MCF 10A (cell line): ENCODE measurements at regions of chr6 and their contacts with region 1.

Region 1: DNA sequence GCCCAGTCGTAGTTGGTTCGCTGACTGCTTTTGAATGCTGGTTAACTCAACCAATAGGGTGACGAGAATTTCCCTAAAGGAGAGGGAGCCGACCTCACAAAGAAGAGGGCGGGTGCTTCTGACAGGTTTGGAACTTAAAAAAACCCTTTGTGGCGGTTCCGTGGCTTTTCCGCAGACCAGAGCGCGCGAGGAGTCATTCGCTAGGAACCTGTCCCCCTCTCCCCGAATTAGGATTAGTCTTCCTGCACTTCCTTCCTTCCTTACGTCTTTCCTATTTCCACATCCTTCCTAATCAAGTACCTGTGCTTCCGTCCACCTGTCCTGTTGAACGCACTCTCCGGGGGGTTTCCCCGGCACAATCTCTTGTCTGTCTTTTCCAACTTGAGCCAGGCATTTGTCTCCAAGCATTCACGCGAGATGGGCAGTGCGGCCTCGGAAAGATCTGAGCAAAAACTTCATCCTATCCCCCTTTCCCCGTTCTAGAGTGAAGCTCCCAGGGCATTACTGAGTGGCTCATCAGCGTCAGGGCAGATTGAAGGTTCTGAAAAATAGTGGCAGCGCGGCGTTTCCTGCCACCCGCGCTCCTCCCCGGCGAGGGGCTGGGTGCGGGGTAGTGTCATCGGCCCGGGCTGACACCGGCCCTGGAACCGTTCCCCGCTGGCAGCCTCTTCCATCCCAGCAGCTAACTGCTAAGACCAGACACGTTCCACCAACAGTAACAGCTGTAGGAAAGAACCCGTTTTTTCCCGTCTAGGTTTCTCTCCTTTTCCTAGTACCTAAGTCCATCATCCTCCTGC is 1.5 kb upstream of the STXBP5 start:
- DNase-seq: peak; percentile 98
- H3K4me3 Mint-ChIP-seq: peak overlapping the region; percentile 83
- H3K27ac Mint-ChIP-seq: peak overlapping the region; percentile 99
- H3K4me1 Mint-ChIP-seq: peaks cover 7% of the 10 kb centered on the region
- H3K27me3 Mint-ChIP-seq: no peaks in the 10 kb centered on the region
- CTCF ChIP-seq: no peak

Region 2: DNA sequence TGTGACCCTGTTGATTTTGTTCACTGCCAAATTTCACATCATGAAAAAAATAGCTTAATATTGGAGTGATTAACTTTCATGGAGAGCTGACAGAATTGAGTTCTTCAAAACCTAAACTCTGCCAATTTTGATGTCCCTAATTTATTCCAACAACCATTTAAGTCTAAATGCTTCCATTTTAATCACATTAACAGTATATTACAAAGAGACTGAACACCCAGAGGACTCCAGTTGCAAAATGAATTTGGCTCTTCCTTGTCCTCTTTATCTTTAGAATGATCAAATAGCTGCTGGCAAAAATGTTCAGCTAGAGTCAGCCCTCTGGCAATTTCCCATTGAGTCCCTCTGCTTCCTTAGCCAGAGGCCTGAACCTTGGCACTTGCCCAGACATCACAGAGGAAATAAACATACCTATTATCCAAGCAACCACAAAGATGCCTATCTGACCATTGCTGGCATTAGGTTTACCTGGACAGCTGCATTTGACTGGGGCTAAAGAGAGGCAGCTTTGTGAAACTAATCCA is 297.5 kb before region 1 on chr6:
- CTCF ChIA-PET with region 1: interaction called, 3 read pairs
- POLR2A ChIA-PET with region 1: interaction called, 95 read pairs
- intact Hi-C with region 1: loop called (anchors 1 kb)
- DNase-seq: peak; percentile 90
- H3K4me3 Mint-ChIP-seq: no peak overlapping the region
- H3K27ac Mint-ChIP-seq: no peak overlapping the region
- H3K4me1 Mint-ChIP-seq: peaks cover 14% of the 10 kb centered on the region
- H3K27me3 Mint-ChIP-seq: no peaks in the 10 kb centered on the region
- CTCF ChIP-seq: no peak

Region 3: GRCh38 chr6:146990821-146991798 is 211.6 kb before region 1 on chr6:
- CTCF ChIA-PET with region 1: no interaction called
- POLR2A ChIA-PET with region 1: interaction called, 8 read pairs
- intact Hi-C with region 1: loop called (anchors 10 kb)
- DNase-seq: peak; percentile 88
- H3K4me3 Mint-ChIP-seq: peak overlapping the region; percentile 23
- H3K27ac Mint-ChIP-seq: peak overlapping the region; percentile 85
- H3K4me1 Mint-ChIP-seq: peaks cover 23% of the 10 kb centered on the region
- H3K27me3 Mint-ChIP-seq: no peaks in the 10 kb centered on the region
- CTCF ChIP-seq: no peak

Region 4: GRCh38 chr6:147099974-147100373 is 102.7 kb before region 1 on chr6:
- CTCF ChIA-PET with region 1: no interaction called
- POLR2A ChIA-PET with region 1: no interaction called
- intact Hi-C with region 1: no loop called
- DNase-seq: peak; percentile 4
- H3K4me3 Mint-ChIP-seq: no peak overlapping the region
- H3K27ac Mint-ChIP-seq: no peak overlapping the region
- H3K4me1 Mint-ChIP-seq: no peaks in the 10 kb centered on the region
- H3K27me3 Mint-ChIP-seq: no peaks in the 10 kb centered on the region
- CTCF ChIP-seq: no peak

Region 5: GRCh38 chr6:147154454-147154853 is 48.3 kb before region 1 on chr6:
- CTCF ChIA-PET with region 1: interaction called, 3 read pairs
- POLR2A ChIA-PET with region 1: interaction called, 18 read pairs
- intact Hi-C with region 1: loop called (anchors 5 kb)
- DNase-seq: peak; percentile 81
- H3K4me3 Mint-ChIP-seq: peak overlapping the region; percentile 43
- H3K27ac Mint-ChIP-seq: peak overlapping the region; percentile 90
- H3K4me1 Mint-ChIP-seq: peaks cover 52% of the 10 kb centered on the region
- H3K27me3 Mint-ChIP-seq: no peaks in the 10 kb centered on the region
- CTCF ChIP-seq: no peak

Region 6: GRCh38 chr6:147184379-147184778 is 18.3 kb before region 1 on chr6:
- CTCF ChIA-PET with region 1: interaction called, 5 read pairs
- POLR2A ChIA-PET with region 1: interaction called, 10 read pairs
- intact Hi-C with region 1: no loop called
- DNase-seq: no peak
- H3K4me3 Mint-ChIP-seq: no peak overlapping the region
- H3K27ac Mint-ChIP-seq: no peak overlapping the region
- H3K4me1 Mint-ChIP-seq: no peaks in the 10 kb centered on the region
- H3K27me3 Mint-ChIP-seq: no peaks in the 10 kb centered on the region
- CTCF ChIP-seq: no peak

Region 7: GRCh38 chr6:147216915-147217314 is 14.2 kb after region 1 on chr6:
- CTCF ChIA-PET with region 1: no interaction called
- POLR2A ChIA-PET with region 1: interaction called, 48 read pairs
- intact Hi-C with region 1: no loop called
- DNase-seq: no peak
- H3K4me3 Mint-ChIP-seq: no peak overlapping the region
- H3K27ac Mint-ChIP-seq: no peak overlapping the region
- H3K4me1 Mint-ChIP-seq: peaks cover 26% of the 10 kb centered on the region
- H3K27me3 Mint-ChIP-seq: no peaks in the 10 kb centered on the region
- CTCF ChIP-seq: no peak

Region 8: DNA sequence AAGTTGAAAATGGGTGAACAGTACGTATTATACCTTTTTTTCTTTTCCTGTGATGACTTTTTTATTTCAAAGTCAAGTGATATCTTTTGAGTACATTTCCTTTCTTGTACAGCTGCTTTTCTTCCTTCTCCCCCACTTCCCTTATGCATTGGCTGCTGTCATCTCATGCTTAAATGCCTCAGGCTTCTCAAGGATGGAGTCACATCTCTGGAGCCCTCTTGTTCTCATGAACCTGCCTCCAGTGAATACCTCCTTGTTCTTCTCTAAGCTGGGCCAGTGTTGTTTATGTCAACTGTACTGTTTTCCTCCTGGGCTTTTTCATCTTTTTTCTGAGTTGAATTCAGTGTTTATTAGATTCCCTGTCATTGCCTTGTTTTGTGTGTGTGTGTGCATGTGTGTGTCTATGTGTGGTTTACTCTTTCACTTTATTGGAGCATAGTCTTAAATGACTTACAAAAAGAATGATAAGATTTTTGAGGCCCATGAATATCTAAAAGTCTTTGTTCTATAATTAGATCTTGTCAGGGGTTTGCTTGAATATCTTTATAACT is 25.1 kb after region 1 on chr6:
- CTCF ChIA-PET with region 1: no interaction called
- POLR2A ChIA-PET with region 1: interaction called, 11 read pairs
- intact Hi-C with region 1: no loop called
- DNase-seq: no peak
- H3K4me3 Mint-ChIP-seq: no peak overlapping the region
- H3K27ac Mint-ChIP-seq: peak overlapping the region; percentile 56
- H3K4me1 Mint-ChIP-seq: peaks cover 26% of the 10 kb centered on the region
- H3K27me3 Mint-ChIP-seq: no peaks in the 10 kb centered on the region
- CTCF ChIP-seq: no peak